ENCODE measurements at regions of chr1 and their contacts with region 1.

Region 1: DNA sequence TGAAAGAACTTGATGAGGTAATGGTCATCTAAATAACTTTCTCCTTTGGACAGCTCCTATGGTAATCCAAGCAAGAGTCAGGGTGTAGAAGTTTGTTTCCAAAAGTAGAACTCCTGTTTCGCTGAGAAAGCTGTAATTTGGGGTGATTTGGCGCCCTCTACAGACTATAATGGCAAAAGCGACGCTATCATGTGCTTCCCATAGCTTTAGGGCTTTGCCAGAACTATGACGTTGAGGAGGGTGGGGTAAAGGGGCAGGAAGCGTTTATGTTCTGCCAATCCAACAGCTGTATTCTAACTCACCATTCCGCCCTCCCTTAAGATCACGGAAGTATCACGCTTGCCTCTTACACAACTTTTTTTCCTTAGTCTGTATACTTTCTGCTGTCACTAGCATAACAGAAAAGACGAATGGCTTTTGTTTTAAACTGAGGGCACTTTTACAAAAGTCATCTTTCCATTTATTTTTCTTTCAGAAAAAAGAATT is at the start of gene FMO4:
- DNase-seq: peak; percentile 90
- ATAC-seq: peak; percentile 100
- H3K4me3 Mint-ChIP-seq: peak within 1 kb of the TSS; percentile 75
- H3K27ac Mint-ChIP-seq: peak within 1 kb of the TSS; percentile 83
- H3K4me1 Mint-ChIP-seq: peaks cover 13% of the 10 kb centered on the region
- H3K27me3 Mint-ChIP-seq: no peaks in the 10 kb centered on the region
- CTCF ChIP-seq: peak; percentile 79
- total RNA-seq, gene FMO4: 1.6 to 2.5 TPM

Region 2: GRCh38 chr1:170692866-170693575 is 620.9 kb before region 1 on chr1:
- CTCF ChIA-PET with region 1: interaction called, 18 read pairs
- POLR2A ChIA-PET with region 1: no interaction called
- intact Hi-C with region 1: no loop called
- DNase-seq: no peak
- ATAC-seq: no peak
- H3K4me3 Mint-ChIP-seq: no peak overlapping the region
- H3K27ac Mint-ChIP-seq: no peak overlapping the region
- H3K4me1 Mint-ChIP-seq: no peaks in the 10 kb centered on the region
- H3K27me3 Mint-ChIP-seq: peaks cover 17% of the 10 kb centered on the region
- CTCF ChIP-seq: no peak

Region 3: DNA sequence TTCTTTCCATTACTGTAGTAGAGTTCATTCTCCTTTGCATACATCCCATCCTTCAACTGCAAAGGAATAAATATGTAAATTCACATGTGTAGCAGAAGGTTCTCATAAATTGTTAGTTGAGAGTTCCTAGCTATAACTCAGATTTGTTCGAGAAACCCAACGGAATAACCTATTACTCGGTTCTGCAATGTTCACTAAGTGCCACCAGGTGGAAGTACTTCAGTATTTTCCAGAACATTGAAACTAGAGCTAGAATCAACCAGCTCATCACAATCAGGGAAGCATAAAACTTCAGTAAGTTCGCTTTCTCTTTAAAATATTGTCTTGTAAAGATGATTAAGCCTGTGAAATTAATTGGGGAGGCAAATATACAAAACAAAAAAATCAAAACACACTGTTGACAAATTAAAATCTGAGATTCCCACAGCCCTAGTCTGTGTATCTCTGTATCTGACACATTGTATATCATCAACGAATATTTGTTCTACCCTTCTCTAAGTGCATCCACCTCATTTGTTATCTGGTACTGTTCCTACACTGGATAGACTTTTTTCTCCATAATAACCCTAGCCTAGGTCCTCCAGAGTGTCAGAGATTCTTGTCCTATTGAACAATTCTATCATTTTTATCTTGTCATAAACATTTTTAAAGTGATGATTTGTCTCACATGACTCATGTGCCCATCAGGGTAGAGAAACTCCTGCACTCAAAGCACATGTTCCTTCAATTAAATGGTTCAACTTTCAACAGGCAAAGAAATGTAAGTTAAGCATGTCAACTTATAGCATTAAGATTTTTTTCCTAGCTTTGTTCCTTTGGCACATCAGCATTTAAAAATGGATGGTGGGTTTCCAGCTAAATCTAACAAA is 346.6 kb before region 1 on chr1:
- CTCF ChIA-PET with region 1: interaction called, 20 read pairs
- POLR2A ChIA-PET with region 1: no interaction called
- intact Hi-C with region 1: no loop called
- DNase-seq: no peak
- ATAC-seq: no peak
- H3K4me3 Mint-ChIP-seq: no peak overlapping the region
- H3K27ac Mint-ChIP-seq: no peak overlapping the region
- H3K4me1 Mint-ChIP-seq: no peaks in the 10 kb centered on the region
- H3K27me3 Mint-ChIP-seq: peaks cover 22% of the 10 kb centered on the region
- CTCF ChIP-seq: peak; percentile 64

Region 4: GRCh38 chr1:171081314-171081753 is 232.5 kb before region 1 on chr1:
- CTCF ChIA-PET with region 1: interaction called, 12 read pairs
- POLR2A ChIA-PET with region 1: no interaction called
- intact Hi-C with region 1: no loop called
- DNase-seq: no peak
- ATAC-seq: no peak
- H3K4me3 Mint-ChIP-seq: no peak overlapping the region
- H3K27ac Mint-ChIP-seq: no peak overlapping the region
- H3K4me1 Mint-ChIP-seq: no peaks in the 10 kb centered on the region
- H3K27me3 Mint-ChIP-seq: peaks cover 6% of the 10 kb centered on the region
- CTCF ChIP-seq: no peak

Region 5: GRCh38 chr1:171226747-171227370 is 87.0 kb before region 1 on chr1:
- CTCF ChIA-PET with region 1: interaction called, 17 read pairs
- POLR2A ChIA-PET with region 1: no interaction called
- intact Hi-C with region 1: no loop called
- DNase-seq: peak; percentile 20
- ATAC-seq: peak; percentile 51
- H3K4me3 Mint-ChIP-seq: no peak overlapping the region
- H3K27ac Mint-ChIP-seq: no peak overlapping the region
- H3K4me1 Mint-ChIP-seq: no peaks in the 10 kb centered on the region
- H3K27me3 Mint-ChIP-seq: peaks cover 6% of the 10 kb centered on the region
- CTCF ChIP-seq: peak; percentile 58

Region 6: GRCh38 chr1:171245458-171246064 is 68.3 kb before region 1 on chr1:
- CTCF ChIA-PET with region 1: interaction called, 71 read pairs
- POLR2A ChIA-PET with region 1: no interaction called
- intact Hi-C with region 1: loop called (anchors 2 kb)
- DNase-seq: peak; percentile 17
- ATAC-seq: no peak
- H3K4me3 Mint-ChIP-seq: no peak overlapping the region
- H3K27ac Mint-ChIP-seq: no peak overlapping the region
- H3K4me1 Mint-ChIP-seq: no peaks in the 10 kb centered on the region
- H3K27me3 Mint-ChIP-seq: peaks cover 33% of the 10 kb centered on the region
- CTCF ChIP-seq: peak; percentile 61

Region 7: GRCh38 chr1:171292799-171293198 is 21.1 kb before region 1 on chr1:
- CTCF ChIA-PET with region 1: interaction called, 13 read pairs
- POLR2A ChIA-PET with region 1: no interaction called
- intact Hi-C with region 1: no loop called
- DNase-seq: no peak
- ATAC-seq: no peak
- H3K4me3 Mint-ChIP-seq: no peak overlapping the region
- H3K27ac Mint-ChIP-seq: no peak overlapping the region
- H3K4me1 Mint-ChIP-seq: no peaks in the 10 kb centered on the region
- H3K27me3 Mint-ChIP-seq: peaks cover 16% of the 10 kb centered on the region
- CTCF ChIP-seq: no peak

Measured in activated CD8-positive, alpha-beta T cell treated with anti-CD3 and anti-CD28 coated beads for 36 hours (primary cell).